Mammary epithelial cell (primary cell): ENCODE measurements at regions of chr2 and their contacts with region 1.

Region 1: DNA sequence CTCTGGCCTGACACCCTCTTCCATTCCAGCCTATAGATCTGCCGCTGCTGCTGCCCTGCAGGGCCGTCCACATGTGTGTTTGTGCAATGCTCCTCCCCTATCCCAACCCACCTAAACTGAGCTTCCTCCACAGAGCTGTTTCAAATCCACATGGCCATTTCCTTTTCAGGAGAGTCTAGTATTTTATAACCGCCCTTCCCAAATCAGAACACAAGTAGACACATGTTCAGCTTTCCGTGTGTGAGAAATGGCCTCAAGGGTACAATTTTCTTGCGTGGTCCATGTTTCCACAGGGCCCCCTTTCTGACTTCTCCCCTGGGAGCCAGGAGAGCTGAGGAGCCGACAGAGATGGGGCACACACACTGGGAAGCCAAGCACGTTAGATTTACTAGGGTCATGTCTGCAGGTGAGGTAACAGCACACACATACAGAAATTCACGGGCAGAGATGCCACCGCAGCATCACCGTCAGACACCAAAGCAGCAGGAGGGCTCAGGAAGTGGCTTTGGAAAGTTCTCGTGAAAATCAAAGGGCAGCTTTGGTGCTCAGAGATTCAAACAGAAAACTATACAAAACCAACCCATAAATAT is 102.9 kb upstream of the TGFA start:
- DNase-seq: no peak
- H3K4me3 ChIP-seq: no peak overlapping the region
- H3K27ac ChIP-seq: no peak overlapping the region
- H3K4me1 ChIP-seq: no peaks in the 10 kb centered on the region
- H3K27me3 ChIP-seq: peaks cover 4% of the 10 kb centered on the region
- CTCF ChIP-seq: no peak

Region 2: GRCh38 chr2:70596739-70597138 is 59.8 kb before region 1 on chr2:
- CTCF ChIA-PET with region 1: no interaction called
- dilution Hi-C with region 1: loop called (anchors 5 kb)
- in situ Hi-C with region 1: no loop called
- intact Hi-C with region 1: no loop called
- DNase-seq: peak; percentile 85
- H3K4me3 ChIP-seq: no peak overlapping the region
- H3K27ac ChIP-seq: peak overlapping the region; percentile 92
- H3K4me1 ChIP-seq: peaks cover 24% of the 10 kb centered on the region
- H3K27me3 ChIP-seq: no peaks in the 10 kb centered on the region
- CTCF ChIP-seq: no peak

Region 3: DNA sequence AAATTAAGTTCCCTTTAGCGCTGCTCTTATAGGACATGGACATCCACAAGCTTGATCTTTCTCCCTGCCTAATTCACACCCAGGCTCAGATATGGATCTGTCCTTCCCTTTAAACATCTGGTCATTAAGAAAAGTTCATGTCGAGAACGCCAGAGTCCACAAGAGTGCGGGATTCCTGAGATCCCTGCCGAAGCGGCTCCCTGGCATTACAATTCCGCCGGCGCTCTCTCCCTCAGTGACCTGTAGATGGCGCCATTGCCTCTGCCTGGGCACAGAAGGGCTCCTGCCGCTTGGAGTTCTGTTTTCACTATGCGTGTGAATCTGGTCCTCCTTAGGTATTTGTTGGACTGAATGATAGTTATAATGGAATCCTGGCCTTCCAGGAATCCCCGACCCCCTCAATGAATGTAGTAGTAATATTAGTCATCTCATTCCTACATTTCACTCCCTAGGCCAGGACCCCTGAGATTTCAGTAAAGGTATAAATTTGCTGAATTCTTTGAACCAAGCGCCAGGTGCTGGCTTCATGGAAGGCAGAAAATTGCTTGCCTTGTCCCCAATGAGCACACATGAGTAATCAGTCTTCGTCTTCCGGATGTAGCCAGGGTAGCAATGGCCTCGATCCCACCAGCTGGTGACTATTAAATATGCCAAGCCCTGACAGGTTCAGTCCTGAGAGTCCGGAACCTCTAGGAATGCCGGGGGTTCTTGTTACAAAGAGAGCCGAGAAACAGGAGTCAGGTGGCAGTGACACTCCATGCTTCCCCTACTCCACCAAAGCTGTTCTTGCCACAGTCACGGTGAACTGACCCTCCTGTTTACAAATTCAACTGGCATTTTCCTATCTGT is 205.5 kb after region 1 on chr2:
- CTCF ChIA-PET with region 1: no interaction called
- dilution Hi-C with region 1: no loop called
- in situ Hi-C with region 1: no loop called
- intact Hi-C with region 1: loop called (anchors 1 kb)
- DNase-seq: peak; percentile 54
- H3K4me3 ChIP-seq: no peak overlapping the region
- H3K27ac ChIP-seq: no peak overlapping the region
- H3K4me1 ChIP-seq: no peaks in the 10 kb centered on the region
- H3K27me3 ChIP-seq: peaks cover 8% of the 10 kb centered on the region
- CTCF ChIP-seq: peak; percentile 95 to 98

Region 4: DNA sequence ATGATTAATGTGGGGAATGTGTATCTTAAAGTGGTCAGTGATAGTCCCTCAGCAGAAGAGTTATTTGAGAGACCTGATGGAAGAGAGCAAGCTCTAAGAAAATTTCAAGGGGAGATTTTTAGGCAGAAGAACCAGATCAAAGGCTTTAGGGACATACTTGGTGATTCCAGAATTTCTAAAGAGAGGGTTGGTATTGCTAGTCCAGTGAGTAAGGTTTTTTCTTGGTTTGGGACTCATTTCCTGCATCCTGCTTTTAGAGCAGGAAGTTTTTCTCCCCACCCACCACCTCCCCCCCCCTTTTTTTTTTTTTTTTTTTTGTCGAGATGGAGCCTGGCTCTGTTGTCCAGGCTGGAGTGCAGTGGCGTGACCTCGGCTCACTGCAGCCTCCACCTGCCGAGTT is 754.2 kb after region 1 on chr2:
- CTCF ChIA-PET with region 1: no interaction called
- dilution Hi-C with region 1: no loop called
- in situ Hi-C with region 1: no loop called
- intact Hi-C with region 1: no loop called
- DNase-seq: no peak
- H3K4me3 ChIP-seq: no peak overlapping the region
- H3K27ac ChIP-seq: no peak overlapping the region
- H3K4me1 ChIP-seq: no peaks in the 10 kb centered on the region
- H3K27me3 ChIP-seq: no peaks in the 10 kb centered on the region
- CTCF ChIP-seq: no peak